Common myeloid progenitor, CD34-positive (primary cell): ENCODE measurements at regions of chr22 and their contacts with region 1.

Region 1: GRCh38 chr22:22720201-22720723 is 75.8 kb downstream of the GGTLC2 start:
- DNase-seq: peak; percentile 82 to 89 (median 89)
- H3K4me3 ChIP-seq: no peak overlapping the region
- H3K27ac ChIP-seq: peak overlapping the region in 1 of 2 experiments; percentile 25
- H3K4me1 ChIP-seq: peaks cover 11 to 28% (median 16%) of the 10 kb centered on the region in 4 experiments
- H3K27me3 ChIP-seq: no peaks in the 10 kb centered on the region

Region 2: GRCh38 chr22:22655452-22656290 is 64.6 kb before region 1 on chr22:
- CTCF ChIA-PET with region 1: no interaction called
- POLR2A ChIA-PET with region 1: no interaction called
- DNase-seq: peak in 1 of 3 donors; percentile 23
- H3K4me3 ChIP-seq: no peak overlapping the region
- H3K27ac ChIP-seq: no peak overlapping the region
- H3K4me1 ChIP-seq: peaks cover 0 to 6% (median 4%) of the 10 kb centered on the region in 4 experiments
- H3K27me3 ChIP-seq: no peaks in the 10 kb centered on the region

Region 3: GRCh38 chr22:22748297-22748743 is 28.1 kb after region 1 on chr22:
- CTCF ChIA-PET with region 1: interaction called, 38 read pairs
- POLR2A ChIA-PET with region 1: no interaction called
- DNase-seq: peak in 2 of 3 donors; percentile 59 to 61
- H3K4me3 ChIP-seq: no peak overlapping the region
- H3K27ac ChIP-seq: no peak overlapping the region
- H3K4me1 ChIP-seq: peaks cover 0 to 10% (median 8%) of the 10 kb centered on the region in 4 experiments
- H3K27me3 ChIP-seq: peaks cover 0 to 7% (median 3%) of the 10 kb centered on the region in 5 experiments

Region 4: DNA sequence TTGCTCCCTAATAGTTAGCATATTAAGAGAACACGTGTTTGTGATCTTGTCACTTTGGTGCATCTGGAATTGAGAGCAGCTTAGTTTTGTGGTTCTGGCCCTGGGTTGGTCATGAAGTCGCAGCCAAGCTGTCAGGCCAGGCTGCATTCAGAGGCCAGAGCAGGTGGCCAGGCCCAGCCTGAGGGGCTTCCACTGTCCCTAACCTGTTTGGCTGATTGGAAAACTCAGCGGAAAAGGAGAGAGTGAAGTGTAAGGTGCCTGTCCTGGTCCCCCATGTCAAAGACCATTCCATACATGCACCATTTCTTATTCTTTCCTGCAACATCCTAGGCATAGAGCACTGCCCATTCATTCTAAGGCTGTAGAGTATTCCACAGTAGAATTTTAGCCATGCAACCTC is 55.9 kb after region 1 on chr22:
- CTCF ChIA-PET with region 1: no interaction called
- POLR2A ChIA-PET with region 1: no interaction called
- DNase-seq: no peak
- H3K4me3 ChIP-seq: no peak overlapping the region
- H3K27ac ChIP-seq: no peak overlapping the region
- H3K4me1 ChIP-seq: no peaks in the 10 kb centered on the region
- H3K27me3 ChIP-seq: no peaks in the 10 kb centered on the region